Aorta (tissue), 5 donors: ENCODE measurements at regions of chr1 and their contacts with region 1.

Region 1: DNA sequence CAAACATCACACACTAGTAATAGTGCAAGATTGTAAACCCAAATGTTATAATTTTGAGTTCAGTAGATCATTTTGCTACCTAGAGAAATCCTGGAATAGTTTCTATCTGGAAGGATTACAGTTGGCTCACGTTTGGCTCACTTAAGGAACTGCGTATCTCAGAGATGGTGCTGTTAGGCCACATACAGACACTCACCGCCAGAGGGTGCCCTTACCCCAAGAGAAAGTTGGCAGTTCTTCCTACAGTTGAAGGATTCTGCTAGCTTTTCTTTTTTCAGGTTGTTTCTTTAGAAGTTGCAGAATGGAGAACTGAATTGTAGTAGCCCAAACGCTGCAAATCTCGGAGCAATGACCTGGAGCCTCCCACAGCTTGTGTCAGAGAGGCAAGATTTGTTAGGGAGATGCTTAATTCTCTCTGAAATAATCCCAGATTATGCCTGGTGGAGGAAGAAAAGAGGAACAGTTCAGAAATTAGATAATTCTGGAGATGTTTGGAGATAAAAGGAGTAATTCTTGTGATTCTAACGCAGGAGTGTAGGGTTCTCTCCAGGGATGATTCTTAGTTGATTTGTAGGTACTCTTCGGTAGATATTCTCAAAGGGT is 87.9 kb upstream of the PAPPA2 start:
- DNase-seq: peak; percentile 85 to 90
- ATAC-seq: peak; percentile 89
- H3K4me3 ChIP-seq: no peak overlapping the region
- H3K27ac ChIP-seq: no peak overlapping the region
- H3K4me1 ChIP-seq: no peaks in the 10 kb centered on the region
- H3K27me3 ChIP-seq: no peaks in the 10 kb centered on the region

Region 2: DNA sequence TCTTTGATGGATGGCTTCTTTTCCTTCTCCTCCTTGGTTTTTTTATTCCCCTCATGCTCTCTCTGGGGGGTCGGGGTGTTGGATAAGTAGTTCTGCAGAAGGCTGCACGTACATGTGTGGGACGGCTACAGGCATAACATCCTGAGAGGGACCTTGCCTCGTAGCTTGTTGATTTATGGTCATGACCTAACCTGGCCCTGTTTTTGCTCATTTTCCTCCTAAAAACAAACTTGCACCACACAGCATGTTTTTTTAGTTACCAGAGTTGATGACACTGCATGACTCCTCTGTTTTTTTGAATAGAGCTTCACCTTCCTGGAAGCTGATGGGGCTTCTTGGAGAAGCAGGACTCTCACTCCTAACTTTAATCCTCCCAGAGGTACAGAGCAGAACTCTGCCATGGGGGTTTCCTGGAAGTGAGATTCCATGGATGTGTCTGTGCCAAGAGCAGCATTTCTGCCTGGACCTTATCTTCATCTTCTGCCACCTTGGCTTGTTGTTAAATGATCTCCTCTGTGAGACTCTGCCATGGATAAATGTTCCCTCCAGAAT is 202.7 kb after region 1 on chr1:
- intact Hi-C with region 1: no loop called
- DNase-seq: no peak
- ATAC-seq: no peak
- H3K4me3 ChIP-seq: no peak overlapping the region
- H3K27ac ChIP-seq: no peak overlapping the region
- H3K4me1 ChIP-seq: peaks cover 0 to 8% of the 10 kb centered on the region in 2 donors
- H3K27me3 ChIP-seq: no peaks in the 10 kb centered on the region

Region 3: DNA sequence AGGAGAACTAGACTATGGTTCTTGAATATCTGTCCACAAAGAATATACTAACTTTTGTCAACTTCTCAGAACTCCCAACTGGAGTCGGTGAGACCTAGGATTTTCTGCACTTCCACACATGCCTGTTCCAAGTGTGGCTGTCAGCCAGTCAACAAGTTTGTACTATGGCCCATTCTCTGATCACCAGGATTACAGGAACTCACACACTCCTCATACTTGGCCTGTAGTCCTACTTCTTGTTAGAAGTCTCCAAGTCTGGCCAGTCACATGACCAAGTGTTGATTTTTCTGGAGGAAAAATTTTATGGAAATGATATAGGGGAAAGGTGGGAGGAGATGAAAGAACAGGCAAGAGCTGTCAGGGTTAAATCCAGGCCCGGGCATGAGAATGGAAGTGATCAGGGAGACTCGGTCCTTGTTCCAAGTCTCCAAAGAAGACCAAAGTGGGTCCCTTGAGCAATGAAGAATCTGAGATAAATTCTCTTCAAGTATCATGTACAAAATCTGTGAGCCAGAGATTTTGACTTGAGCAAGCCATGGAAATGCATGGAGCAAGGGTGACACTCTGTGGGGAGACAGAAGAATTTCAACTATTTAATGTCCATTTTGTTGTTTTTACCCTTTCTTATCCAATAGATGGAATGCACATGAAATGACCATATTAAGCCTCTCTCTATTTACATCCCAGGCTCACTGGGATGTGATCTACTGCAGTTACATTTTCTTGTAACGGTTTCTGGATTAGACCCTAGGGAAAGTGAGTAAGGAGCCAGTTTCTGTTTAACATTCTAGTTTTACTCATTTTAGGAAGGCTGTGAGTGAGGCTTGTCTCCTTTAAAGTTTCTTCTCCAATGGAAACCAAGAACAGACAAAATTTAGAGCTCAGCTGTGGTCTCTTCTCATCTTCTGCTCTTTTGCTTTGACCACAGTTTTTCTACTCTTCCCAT is 468.6 kb after region 1 on chr1:
- intact Hi-C with region 1: loop called (anchors 1 to 5 kb)
- DNase-seq: peak in 1 of 2 donors; percentile 50
- ATAC-seq: peak; percentile 76
- H3K4me3 ChIP-seq: no peak overlapping the region
- H3K27ac ChIP-seq: no peak overlapping the region
- H3K4me1 ChIP-seq: no peaks in the 10 kb centered on the region
- H3K27me3 ChIP-seq: no peaks in the 10 kb centered on the region

Region 4: GRCh38 chr1:176880954-176881595 is 506.0 kb after region 1 on chr1:
- intact Hi-C with region 1: loop called (anchors 2 to 5 kb)
- DNase-seq: peak; percentile 69 to 91
- ATAC-seq: peak; percentile 74
- H3K4me3 ChIP-seq: no peak overlapping the region
- H3K27ac ChIP-seq: no peak overlapping the region
- H3K4me1 ChIP-seq: peaks cover 0 to 2% of the 10 kb centered on the region in 2 donors
- H3K27me3 ChIP-seq: no peaks in the 10 kb centered on the region